ENCODE measurements at regions of chr1 and their contacts with region 1.

Region 1: GRCh38 chr1:173714759-173715537 is at the start of gene KLHL20:
- DNase-seq: peak; percentile 56 to 75
- ATAC-seq: peak; percentile 99
- H3K4me3 ChIP-seq: peak within 1 kb of the TSS; percentile 80 to 98 (median 84)
- H3K27ac ChIP-seq: peak within 1 kb of the TSS; percentile 80 to 92 (median 85)
- H3K4me1 ChIP-seq: peaks cover 22% of the 10 kb centered on the region in 2 donors
- H3K27me3 ChIP-seq: peaks cover 0 to 5% (median 0%) of the 10 kb centered on the region in 3 donors
- CTCF ChIP-seq: no peak
- POLR2A ChIP-seq: peak; percentile 55 to 61
- total RNA-seq, gene KLHL20: 15.9 to 23.9 (median 23.4) TPM

Region 2: DNA sequence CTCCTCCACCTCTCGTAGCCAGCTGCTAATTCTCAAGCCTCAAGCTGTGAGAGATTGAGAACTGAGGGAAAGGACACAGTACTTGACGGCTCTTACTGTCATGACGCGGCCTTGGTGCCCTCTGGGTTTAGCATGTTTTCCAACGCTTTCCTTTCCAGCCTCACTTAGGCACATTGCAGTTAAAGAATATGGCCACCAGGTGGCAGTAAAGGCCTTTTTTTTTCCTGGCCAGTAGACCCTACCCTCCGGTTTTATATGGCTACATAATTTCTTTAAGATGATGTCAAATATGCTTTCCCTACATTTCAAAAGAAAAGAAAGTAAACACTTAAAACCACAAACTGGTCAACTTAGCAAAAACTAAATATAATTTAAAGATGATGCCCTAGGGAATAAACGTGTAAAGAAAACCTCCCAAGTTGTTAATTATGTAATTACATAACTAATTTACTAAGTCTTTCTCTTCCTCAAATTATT is 294.6 kb before region 1 on chr1:
- in situ Hi-C with region 1: loop called in 1 of 4 experiments (anchors 25 kb)
- intact Hi-C with region 1: loop called (anchors 5 kb)
- DNase-seq: peak in 1 of 2 donors; percentile 40
- ATAC-seq: peak; percentile 76 to 87
- H3K4me3 ChIP-seq: peak overlapping the region in 1 of 4 donors; percentile 8
- H3K27ac ChIP-seq: no peak overlapping the region
- H3K4me1 ChIP-seq: peaks cover 2 to 3% of the 10 kb centered on the region in 2 donors
- H3K27me3 ChIP-seq: no peaks in the 10 kb centered on the region
- CTCF ChIP-seq: peak; percentile 77 to 87 (median 82)
- POLR2A ChIP-seq: no peak

Measured in gastrocnemius medialis (tissue), 4 donors.